GM18951 (cell line): ENCODE measurements at regions of chr16 and their contacts with region 1.

Region 1: GRCh38 chr16:19086322-19087199 is 19.1 kb downstream of the COQ7 start:
- POLR2A ChIP-seq: no peak

Region 2: DNA sequence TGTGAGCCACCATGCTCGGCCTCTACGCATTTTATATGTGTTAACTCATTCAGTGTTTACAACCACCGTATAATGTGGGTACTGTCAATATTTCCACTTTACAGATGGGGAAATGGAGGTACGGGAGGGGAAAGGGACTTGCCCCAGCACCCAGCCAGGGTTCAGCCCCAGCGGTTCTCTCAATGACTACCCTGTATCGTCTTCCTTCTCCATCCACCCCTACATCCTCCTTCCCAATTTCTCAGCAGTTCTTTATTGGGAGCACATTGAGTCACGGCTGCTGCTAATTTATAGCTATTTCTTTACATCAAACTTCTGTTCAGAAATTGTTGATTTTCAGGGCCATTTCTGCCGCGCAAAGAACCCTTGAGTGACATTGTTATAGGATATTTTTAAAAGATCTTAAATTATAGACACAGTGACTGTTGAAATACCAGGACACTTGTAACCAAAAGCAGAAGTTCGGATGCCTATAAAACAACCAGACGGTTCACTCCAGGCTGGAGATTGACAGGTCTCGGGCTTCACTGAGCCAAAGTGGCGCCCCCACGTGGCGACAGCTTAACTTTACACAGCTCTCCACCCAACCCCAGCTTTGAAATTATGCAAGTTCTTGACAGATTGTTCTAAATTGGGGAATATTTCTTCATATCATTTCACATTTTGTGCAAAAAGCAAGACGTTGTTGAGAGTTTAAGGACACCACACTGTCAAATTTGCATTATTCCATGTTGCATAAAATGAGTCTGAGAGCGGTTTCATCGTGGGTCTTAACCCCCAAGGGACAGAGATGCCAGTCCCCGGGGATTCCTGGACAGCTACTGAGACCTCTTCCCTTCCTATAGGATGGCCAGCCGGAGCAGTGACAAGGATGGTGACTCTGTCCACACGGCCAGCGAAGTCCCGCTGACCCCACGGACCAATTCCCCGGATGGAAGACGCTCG is 93.3 kb after region 1 on chr16:
- in situ Hi-C with region 1: loop called (anchors 5 kb)
- POLR2A ChIP-seq: no peak

Region 3: GRCh38 chr16:19375561-19376158 is 289.1 kb after region 1 on chr16:
- in situ Hi-C with region 1: loop called (anchors 5 kb)
- POLR2A ChIP-seq: no peak

Region 4: GRCh38 chr16:19502395-19503131 is 416.0 kb after region 1 on chr16:
- in situ Hi-C with region 1: loop called (anchors 10 kb)
- POLR2A ChIP-seq: no peak